Activated CD8-positive, alpha-beta memory T cell treated with anti-CD3 and anti-CD28 coated beads, Interleukin-2, amount 10 ng/mL, durations not matched to agents 7 days and 5 days (primary cell): ENCODE measurements at regions of chr10 and their contacts with region 1.

Region 1: DNA sequence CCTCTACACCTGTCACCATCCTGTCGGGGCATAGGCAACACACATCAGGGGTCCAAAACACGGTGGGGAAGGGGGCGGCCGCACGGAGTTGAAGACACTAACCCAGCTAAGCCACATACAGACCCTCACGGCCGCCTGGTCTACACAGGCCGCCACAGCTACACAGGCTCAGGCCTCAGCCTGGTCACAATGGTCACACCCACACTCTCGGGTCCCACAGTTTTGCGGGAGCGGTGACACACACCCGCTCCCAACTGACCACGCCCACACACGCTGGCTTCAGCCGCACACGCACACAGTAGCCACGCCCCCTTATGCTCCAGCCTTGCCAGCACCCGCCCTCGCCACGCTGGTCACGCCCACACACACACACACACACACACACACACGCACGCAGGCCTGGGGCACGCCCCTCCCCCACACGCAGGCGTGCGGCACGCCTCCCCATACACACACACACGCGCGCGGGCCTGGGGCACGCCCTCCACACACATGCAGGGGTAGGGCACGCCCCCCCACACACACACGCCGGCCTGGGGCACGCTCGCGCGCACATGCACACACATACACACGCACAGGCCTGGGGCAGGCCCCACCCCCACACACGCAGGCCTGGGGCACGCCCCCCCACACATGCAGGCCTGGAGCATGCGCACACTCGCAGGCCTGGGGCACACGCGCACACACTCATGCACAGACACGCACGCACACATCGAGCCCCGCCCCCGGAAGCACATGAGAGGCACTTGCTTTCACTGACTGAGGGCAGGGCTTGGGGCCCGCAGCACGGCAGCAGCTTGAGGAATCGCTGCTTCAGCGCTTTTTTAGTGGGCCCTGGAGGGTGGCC is 12.3 kb upstream of the OGA start:
- DNase-seq: peak; percentile 93
- ATAC-seq: peak; percentile 82
- H3K4me3 Mint-ChIP-seq: peak overlapping the region; percentile 75
- H3K27ac Mint-ChIP-seq: peak overlapping the region; percentile 88
- H3K4me1 Mint-ChIP-seq: peaks cover 43% of the 10 kb centered on the region
- H3K27me3 Mint-ChIP-seq: no peaks in the 10 kb centered on the region

Region 2: DNA sequence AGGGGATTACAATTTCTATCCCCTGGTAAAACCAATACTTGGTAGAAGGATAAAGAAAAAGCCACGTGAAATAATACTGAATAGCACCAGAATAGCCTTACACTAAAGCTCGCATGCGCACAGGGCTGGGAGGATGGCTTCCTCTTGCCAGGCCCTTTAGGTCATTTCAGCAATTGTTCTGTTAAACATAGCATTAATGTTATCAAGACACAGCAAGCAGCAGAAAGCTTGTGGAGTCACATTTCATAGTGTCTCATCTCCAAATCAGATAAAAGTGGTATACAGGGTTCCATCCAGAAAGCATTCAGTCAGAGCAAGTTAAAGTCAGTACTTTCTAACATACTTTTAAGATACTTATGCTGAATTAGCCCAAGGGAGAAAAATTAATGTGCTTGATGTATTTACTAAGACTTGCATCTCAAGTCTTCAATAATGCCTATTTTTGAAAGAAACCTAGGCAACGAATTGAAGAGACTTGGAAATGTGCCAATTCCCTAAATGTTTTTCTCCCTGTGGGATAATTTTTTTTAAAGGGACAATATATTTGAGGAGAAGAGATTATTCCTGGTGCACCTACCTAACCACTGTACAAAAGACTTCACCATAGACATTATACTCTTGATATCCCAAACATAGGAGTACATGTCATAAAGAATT is 33.0 kb before region 1 on chr10:
- CTCF ChIA-PET with region 1: no interaction called
- DNase-seq: no peak
- ATAC-seq: no peak
- H3K4me3 Mint-ChIP-seq: no peak overlapping the region
- H3K27ac Mint-ChIP-seq: no peak overlapping the region
- H3K4me1 Mint-ChIP-seq: peaks cover 3% of the 10 kb centered on the region
- H3K27me3 Mint-ChIP-seq: no peaks in the 10 kb centered on the region

Region 3: GRCh38 chr10:101818119-101818871 is 12.2 kb before region 1 on chr10 and contains the start of gene OGA:
- CTCF ChIA-PET with region 1: interaction called, 21 read pairs
- DNase-seq: peak; percentile 99
- ATAC-seq: peak; percentile 92
- H3K4me3 Mint-ChIP-seq: peak within 1 kb of the TSS; percentile 90
- H3K27ac Mint-ChIP-seq: peak within 1 kb of the TSS; percentile 97
- H3K4me1 Mint-ChIP-seq: peaks cover 41% of the 10 kb centered on the region
- H3K27me3 Mint-ChIP-seq: no peaks in the 10 kb centered on the region
- total RNA-seq, gene OGA: 120 to 139 TPM

Region 4: DNA sequence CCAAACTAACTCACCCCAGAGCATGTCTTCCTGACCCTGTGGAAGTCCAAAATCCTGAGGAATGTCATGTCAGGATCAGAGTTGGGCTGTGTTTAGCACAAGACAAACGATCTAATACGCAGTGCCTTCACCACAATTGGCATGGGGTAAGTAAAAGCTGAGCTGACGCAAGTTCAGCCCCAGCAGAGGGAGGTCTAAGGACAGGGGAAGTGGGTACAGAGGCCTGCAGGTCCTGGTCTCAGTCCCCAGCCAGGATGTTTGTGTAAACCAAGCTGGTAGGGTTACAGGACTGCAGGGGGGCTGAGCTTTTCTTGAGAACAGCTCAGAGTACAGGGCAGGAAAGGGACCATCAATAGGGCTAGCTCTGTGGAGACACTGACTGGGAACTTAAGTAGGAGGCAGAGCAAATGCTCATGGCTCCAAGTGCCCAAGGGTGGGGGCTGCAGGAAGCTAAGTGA is 18.4 kb after region 1 on chr10:
- CTCF ChIA-PET with region 1: interaction called, 14 read pairs
- DNase-seq: no peak
- ATAC-seq: no peak
- H3K4me3 Mint-ChIP-seq: no peak overlapping the region
- H3K27ac Mint-ChIP-seq: no peak overlapping the region
- H3K4me1 Mint-ChIP-seq: peaks cover 9% of the 10 kb centered on the region
- H3K27me3 Mint-ChIP-seq: peaks cover 4% of the 10 kb centered on the region

Region 5: GRCh38 chr10:101858723-101859500 is 28.4 kb after region 1 on chr10:
- CTCF ChIA-PET with region 1: interaction called, 19 read pairs
- DNase-seq: no peak
- ATAC-seq: peak; percentile 93
- H3K4me3 Mint-ChIP-seq: no peak overlapping the region
- H3K27ac Mint-ChIP-seq: peak overlapping the region; percentile 60
- H3K4me1 Mint-ChIP-seq: peaks cover 24% of the 10 kb centered on the region
- H3K27me3 Mint-ChIP-seq: no peaks in the 10 kb centered on the region